IMR-90 (cell line): ENCODE measurements at regions of chr3 and their contacts with region 1.

Region 1: GRCh38 chr3:192444096-192444790 is 283.1 kb downstream of the FGF12 start:
- DNase-seq: peak; percentile 53
- ATAC-seq: peak; percentile 97
- H3K4me3 ChIP-seq: no peak overlapping the region
- H3K27ac ChIP-seq: no peak overlapping the region
- H3K4me1 ChIP-seq: no peaks in the 10 kb centered on the region
- H3K27me3 ChIP-seq: no peaks in the 10 kb centered on the region
- CTCF ChIP-seq: peak; percentile 98
- POLR2A ChIP-seq: 0 out of 2 replicates have a peak, but pooled peaks have one; percentile 33
- RAD21 ChIP-seq: peak; percentile 97

Region 2: DNA sequence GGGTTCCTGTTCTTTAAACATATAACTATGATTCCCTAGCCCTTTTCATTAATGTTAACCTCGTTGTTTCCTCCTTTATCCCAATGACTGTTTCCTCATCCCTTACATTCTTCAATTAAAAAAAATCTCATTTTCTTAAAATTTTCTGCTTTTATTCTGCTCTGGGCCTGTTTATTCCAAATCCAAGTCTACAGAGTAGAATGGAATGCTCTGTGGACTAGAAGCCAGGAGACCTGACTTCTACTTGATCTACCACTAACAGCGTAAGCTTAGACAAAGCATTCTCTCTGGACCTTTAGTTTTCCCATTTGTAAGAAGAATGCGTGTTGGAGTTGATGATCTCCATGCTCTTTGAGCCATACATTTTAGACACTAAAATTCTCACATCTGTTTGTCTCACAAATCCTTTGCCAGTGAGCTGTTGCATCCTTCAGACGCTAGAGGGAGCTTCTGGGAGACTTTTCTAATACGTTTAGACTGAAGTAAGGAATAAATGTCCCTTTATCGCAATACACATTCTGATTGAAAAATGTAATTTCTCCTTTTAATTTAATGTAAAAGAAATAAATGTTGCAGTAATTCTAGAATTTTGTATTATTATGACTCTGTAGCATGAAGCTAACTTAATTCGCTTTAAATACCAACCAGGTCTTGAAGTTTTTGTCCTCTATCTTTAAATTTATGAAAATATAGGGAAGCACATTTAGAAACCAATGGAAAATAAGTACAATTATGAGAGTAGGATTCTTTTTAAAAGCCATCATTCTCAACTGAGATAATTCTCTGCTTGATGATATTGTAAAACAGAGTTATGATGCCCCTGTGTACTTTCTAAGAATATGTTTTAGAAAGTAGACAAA is 1560.0 kb before region 1 on chr3:
- CTCF ChIA-PET with region 1: no interaction called
- POLR2A ChIA-PET with region 1: no interaction called
- dilution Hi-C with region 1: no loop called
- in situ Hi-C with region 1: no loop called
- intact Hi-C with region 1: loop called (anchors 1 kb)
- DNase-seq: peak; percentile 66
- ATAC-seq: peak; percentile 94
- H3K4me3 ChIP-seq: no peak overlapping the region
- H3K27ac ChIP-seq: no peak overlapping the region
- H3K4me1 ChIP-seq: no peaks in the 10 kb centered on the region
- H3K27me3 ChIP-seq: no peaks in the 10 kb centered on the region
- CTCF ChIP-seq: peak; percentile 87
- POLR2A ChIP-seq: no peak
- RAD21 ChIP-seq: peak; percentile 70

Region 3: DNA sequence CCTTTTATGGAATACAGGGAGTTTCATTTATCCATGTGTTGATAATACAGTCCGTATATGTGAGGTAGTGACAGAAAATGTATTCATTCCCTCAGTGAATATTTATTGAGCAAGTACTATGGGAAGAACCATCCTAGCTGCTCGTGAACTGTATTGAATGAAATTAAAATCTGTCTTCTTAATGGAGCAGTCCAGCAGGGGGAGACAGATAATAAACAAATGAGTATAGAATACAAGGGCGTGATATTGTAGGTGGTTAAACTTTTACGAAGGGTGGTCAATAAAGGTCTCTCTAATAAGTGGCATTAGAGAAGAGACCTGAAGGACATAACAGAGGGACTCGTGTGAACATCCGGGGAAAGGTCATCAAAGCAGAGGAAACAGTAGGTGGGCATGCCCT is 1307.9 kb before region 1 on chr3:
- CTCF ChIA-PET with region 1: no interaction called
- POLR2A ChIA-PET with region 1: no interaction called
- dilution Hi-C with region 1: no loop called
- in situ Hi-C with region 1: no loop called
- intact Hi-C with region 1: loop called (anchors 5 kb)
- DNase-seq: peak; percentile 18
- ATAC-seq: peak; percentile 49; the same call in 1 of the 2 replicates
- H3K4me3 ChIP-seq: no peak overlapping the region
- H3K27ac ChIP-seq: no peak overlapping the region
- H3K4me1 ChIP-seq: no peaks in the 10 kb centered on the region
- H3K27me3 ChIP-seq: no peaks in the 10 kb centered on the region
- CTCF ChIP-seq: peak; percentile 44
- POLR2A ChIP-seq: no peak
- RAD21 ChIP-seq: peak; percentile 46; the same call in 1 of the 2 replicates

Region 4: GRCh38 chr3:191412759-191413158 is 1031.5 kb before region 1 on chr3:
- CTCF ChIA-PET with region 1: interaction called, 6 read pairs
- POLR2A ChIA-PET with region 1: interaction called, 3 read pairs
- dilution Hi-C with region 1: no loop called
- in situ Hi-C with region 1: loop called (anchors 5 kb)
- intact Hi-C with region 1: loop called (anchors 1 kb)
- DNase-seq: peak; percentile 97
- ATAC-seq: peak; percentile 90
- H3K4me3 ChIP-seq: no peak overlapping the region; the same call in 1 of the 2 replicates
- H3K27ac ChIP-seq: no peak overlapping the region
- H3K4me1 ChIP-seq: peaks cover 3% of the 10 kb centered on the region; the same call in 1 of the 2 replicates
- H3K27me3 ChIP-seq: no peaks in the 10 kb centered on the region
- CTCF ChIP-seq: no peak
- POLR2A ChIP-seq: no peak
- RAD21 ChIP-seq: no peak

Region 5: DNA sequence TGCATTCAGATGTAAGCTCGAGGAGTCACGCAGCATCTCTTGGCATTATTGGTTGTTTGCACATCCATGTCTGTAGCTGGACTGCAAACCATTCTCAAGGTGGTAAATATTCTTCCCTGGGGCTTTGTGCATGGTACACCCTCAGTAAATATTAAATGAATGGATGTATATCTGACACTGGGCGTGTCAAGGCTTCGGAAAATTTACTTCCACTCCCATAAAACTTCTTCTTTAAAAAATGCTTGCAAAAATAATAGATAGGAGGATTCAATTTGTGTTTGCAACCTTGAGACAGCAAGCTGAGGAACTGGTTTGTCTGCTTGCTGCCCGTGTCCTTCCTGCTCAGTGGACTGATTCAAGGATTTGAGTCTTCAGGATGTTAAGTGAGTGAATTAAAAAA is 170.7 kb before region 1 on chr3:
- CTCF ChIA-PET with region 1: no interaction called
- POLR2A ChIA-PET with region 1: no interaction called
- dilution Hi-C with region 1: no loop called
- in situ Hi-C with region 1: no loop called
- intact Hi-C with region 1: no loop called
- DNase-seq: no peak
- ATAC-seq: no peak
- H3K4me3 ChIP-seq: no peak overlapping the region
- H3K27ac ChIP-seq: no peak overlapping the region
- H3K4me1 ChIP-seq: no peaks in the 10 kb centered on the region
- H3K27me3 ChIP-seq: no peaks in the 10 kb centered on the region
- CTCF ChIP-seq: no peak
- POLR2A ChIP-seq: no peak
- RAD21 ChIP-seq: no peak

Region 6: GRCh38 chr3:192423003-192423349 is 21.3 kb before region 1 on chr3:
- CTCF ChIA-PET with region 1: interaction called, 13 read pairs
- POLR2A ChIA-PET with region 1: no interaction called
- dilution Hi-C with region 1: no loop called
- in situ Hi-C with region 1: no loop called
- intact Hi-C with region 1: no loop called
- DNase-seq: no peak
- ATAC-seq: no peak
- H3K4me3 ChIP-seq: no peak overlapping the region
- H3K27ac ChIP-seq: no peak overlapping the region
- H3K4me1 ChIP-seq: no peaks in the 10 kb centered on the region
- H3K27me3 ChIP-seq: no peaks in the 10 kb centered on the region
- CTCF ChIP-seq: 0 out of 2 replicates have a peak, but pooled peaks have one; percentile 10
- POLR2A ChIP-seq: no peak
- RAD21 ChIP-seq: no peak

Region 7: GRCh38 chr3:193347521-193348501 is 903.6 kb after region 1 on chr3:
- CTCF ChIA-PET with region 1: no interaction called
- POLR2A ChIA-PET with region 1: no interaction called
- dilution Hi-C with region 1: no loop called
- in situ Hi-C with region 1: no loop called
- intact Hi-C with region 1: no loop called
- DNase-seq: no peak
- ATAC-seq: no peak
- H3K4me3 ChIP-seq: no peak overlapping the region
- H3K27ac ChIP-seq: no peak overlapping the region
- H3K4me1 ChIP-seq: no peaks in the 10 kb centered on the region
- H3K27me3 ChIP-seq: no peaks in the 10 kb centered on the region
- CTCF ChIP-seq: no peak
- POLR2A ChIP-seq: no peak
- RAD21 ChIP-seq: no peak